ENCODE measurements at regions of chr1 and their contacts with region 1.

Region 1: GRCh38 chr1:44235808-44236207 is 22.5 kb downstream of the DMAP1 start:
- DNase-seq: no peak
- ATAC-seq: no peak
- H3K4me3 ChIP-seq: no peak overlapping the region
- H3K27ac ChIP-seq: no peak overlapping the region
- H3K4me1 ChIP-seq: no peaks in the 10 kb centered on the region; the same call in 1 of the 2 replicates
- H3K27me3 ChIP-seq: no peaks in the 10 kb centered on the region
- CTCF ChIP-seq: no peak

Region 2: DNA sequence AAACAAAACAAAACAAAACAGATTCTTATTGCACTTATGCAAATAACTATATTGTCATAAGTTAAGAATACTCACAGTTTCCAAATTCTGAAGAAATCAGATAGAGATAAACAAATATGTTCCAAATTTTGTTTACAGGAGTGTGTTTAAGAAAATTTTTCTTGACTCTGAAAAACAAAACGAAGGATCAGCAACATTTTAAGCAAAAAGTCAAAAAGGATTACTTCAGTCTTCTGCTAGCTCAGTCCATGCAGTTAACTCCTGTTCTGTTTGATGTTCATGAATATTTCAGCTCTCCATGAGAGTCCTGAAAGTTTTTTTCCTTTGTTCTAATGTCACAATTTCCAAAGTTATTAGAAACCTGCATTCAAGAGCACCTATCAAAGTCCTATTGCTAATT is 61.2 kb before region 1 on chr1:
- CTCF ChIA-PET with region 1: interaction called, 10 read pairs
- POLR2A ChIA-PET with region 1: no interaction called
- in situ Hi-C with region 1: no loop called
- intact Hi-C with region 1: no loop called
- DNase-seq: no peak
- ATAC-seq: no peak
- H3K4me3 ChIP-seq: no peak overlapping the region
- H3K27ac ChIP-seq: no peak overlapping the region
- H3K4me1 ChIP-seq: no peaks in the 10 kb centered on the region
- H3K27me3 ChIP-seq: no peaks in the 10 kb centered on the region
- CTCF ChIP-seq: no peak